ENCODE measurements at regions of chr17 and their contacts with region 1.

Region 1: DNA sequence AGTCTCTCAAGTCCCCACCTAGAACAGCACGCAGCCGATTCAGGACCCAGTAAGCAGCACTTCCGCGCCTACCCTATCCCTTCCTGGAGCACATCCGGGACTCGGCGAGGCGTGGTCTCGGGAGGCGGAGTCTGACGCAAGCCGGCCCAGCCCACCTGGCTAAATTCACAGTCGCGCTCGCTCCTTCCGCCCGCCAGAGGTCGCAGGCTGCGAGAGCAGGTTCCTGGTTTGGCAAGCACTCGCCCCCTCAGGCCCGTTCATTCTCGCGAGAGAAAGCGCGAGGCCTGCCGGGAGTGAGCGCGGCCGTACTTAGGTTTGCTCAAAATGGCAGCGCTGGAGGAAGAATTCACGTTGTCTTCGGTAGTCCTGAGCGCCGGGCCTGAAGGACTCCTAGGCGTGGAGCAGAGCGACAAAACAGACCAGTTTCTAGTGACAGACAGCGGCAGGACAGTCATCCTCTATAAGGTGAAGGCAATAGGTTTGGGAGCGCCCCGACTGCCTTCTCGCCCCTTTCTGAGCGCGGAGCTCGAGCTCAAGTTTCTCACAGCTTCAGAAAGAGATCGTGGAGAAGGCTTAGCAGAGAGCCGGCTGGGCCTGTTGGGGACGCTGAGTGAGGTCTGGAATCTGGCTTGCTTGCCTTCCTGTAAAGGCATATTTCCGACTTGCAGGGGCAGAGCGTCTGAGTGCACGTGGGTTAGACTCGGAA is at the start of gene NOL11:
- DNase-seq: peak; percentile 99 to 100 (median 99)
- ATAC-seq: peak; percentile 91
- H3K4me3 ChIP-seq: peak within 1 kb of the TSS; percentile 81
- H3K4me3 Mint-ChIP-seq: peak within 1 kb of the TSS; percentile 97
- H3K27ac ChIP-seq: peak within 1 kb of the TSS; percentile 91 to 95
- H3K27ac Mint-ChIP-seq: peak within 1 kb of the TSS; percentile 95
- H3K4me1 ChIP-seq: peaks cover 20% of the 10 kb centered on the region
- H3K4me1 Mint-ChIP-seq: peaks cover 30% of the 10 kb centered on the region
- H3K27me3 ChIP-seq: no peaks in the 10 kb centered on the region
- H3K27me3 Mint-ChIP-seq: no peaks in the 10 kb centered on the region
- CTCF ChIP-seq: peak; percentile 83
- total RNA-seq, gene NOL11: 89.1 to 91.2 TPM

Region 2: DNA sequence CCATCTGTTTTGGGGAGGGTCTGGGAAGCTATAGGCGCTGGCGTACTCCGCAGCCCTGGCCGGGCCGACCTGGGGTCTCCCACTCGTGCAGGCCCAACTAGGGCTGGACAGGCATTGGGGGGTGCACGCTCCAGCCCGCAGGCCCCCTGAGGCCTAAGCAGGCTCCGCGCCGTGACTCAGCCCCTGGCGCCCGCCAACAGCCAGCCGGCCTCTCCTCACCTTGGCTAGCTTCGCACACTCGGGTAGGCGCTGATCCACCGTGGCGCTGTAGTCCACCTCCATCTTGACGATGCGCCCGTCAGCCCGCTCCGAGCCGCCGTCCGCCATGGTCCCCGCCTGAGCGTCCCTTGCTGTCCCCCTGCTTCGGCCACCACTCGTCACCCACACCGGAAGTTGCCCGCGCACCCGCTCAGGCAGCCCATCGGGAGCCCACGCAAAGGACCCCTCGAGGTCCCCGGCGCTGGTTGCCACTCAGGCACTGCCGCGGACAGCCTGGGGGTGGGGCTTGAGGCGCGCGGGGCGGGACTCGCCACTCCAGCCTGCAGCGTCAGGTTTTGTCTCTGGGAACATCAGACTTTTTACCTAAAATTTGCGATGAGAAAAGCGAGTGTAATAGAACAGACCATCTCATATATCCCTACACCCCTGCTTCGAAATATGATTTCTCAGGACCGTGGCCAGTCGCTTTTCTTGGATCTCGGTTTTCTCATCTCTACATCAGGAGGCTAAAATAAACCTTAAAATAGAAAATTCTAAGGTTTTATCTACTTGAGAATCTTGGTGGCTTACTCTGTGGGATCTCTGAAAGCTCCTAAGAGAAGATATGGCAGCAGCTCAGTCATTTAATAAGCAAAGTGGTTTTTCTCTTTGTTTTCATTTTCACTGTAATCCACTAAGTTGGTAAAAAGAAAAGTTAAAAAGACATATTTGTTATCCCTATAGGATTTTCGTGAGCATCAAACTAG is 351.3 kb before region 1 on chr17 and contains the start of gene PSMD12:
- CTCF ChIA-PET with region 1: interaction called, 4 read pairs
- POLR2A ChIA-PET with region 1: interaction called, 4 read pairs
- intact Hi-C with region 1: loop called in 1 of 2 experiments (anchors 2 kb)
- DNase-seq: peak; percentile 86 to 96 (median 94)
- ATAC-seq: peak; percentile 93
- H3K4me3 ChIP-seq: peak within 1 kb of the TSS; percentile 87
- H3K4me3 Mint-ChIP-seq: peak within 1 kb of the TSS; percentile 97
- H3K27ac ChIP-seq: peak within 1 kb of the TSS; percentile 91 to 93
- H3K27ac Mint-ChIP-seq: peak within 1 kb of the TSS; percentile 89
- H3K4me1 ChIP-seq: peaks cover 33% of the 10 kb centered on the region
- H3K4me1 Mint-ChIP-seq: peaks cover 39% of the 10 kb centered on the region
- H3K27me3 ChIP-seq: no peaks in the 10 kb centered on the region
- H3K27me3 Mint-ChIP-seq: no peaks in the 10 kb centered on the region
- CTCF ChIP-seq: no peak
- total RNA-seq, gene PSMD12: 49.3 to 52.5 TPM

Region 3: DNA sequence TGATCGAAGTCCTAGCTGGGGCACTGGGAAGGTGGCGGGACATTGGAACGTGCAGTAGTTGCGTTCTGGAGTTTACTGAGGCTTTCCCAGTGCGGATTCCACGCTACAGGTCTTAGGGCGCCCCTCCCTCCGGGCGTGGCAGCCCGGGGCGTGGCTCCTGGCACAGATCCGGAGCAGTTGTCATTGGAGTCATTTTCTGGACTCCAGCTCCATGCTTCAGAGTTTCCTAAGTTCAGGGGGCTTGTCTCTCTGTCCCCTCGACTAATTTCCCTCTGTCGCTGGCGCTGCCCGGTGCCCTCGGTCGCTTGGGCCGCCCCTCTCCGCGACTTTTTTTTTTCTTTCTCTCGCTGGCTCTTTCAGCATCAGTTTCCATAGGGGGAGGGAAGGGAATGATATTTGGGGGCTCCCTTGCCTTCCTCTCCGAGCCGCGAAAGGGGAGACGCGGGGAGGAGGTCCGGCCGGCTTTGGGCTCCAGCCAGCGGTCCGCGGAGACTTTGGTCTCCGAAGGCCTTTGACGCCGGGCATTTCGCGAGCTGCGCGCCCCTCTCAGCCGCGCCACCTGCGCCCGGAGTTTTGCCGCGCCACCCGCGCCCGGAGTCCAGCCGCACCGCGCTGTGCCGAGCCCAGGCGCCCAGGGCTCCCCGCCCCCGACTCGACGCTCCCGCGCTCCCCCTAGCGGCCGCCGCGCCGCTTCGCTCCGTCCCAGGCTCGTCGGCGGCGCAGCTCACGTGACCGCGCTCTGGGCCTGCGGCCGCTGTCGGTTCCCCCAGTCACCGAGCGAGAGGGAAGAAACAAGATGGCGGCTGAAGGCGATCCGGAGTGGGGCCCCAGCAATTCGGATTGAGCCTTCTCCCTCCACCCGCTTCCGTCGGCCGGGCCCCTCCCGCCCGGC is 107.2 kb after region 1 on chr17 and contains the start of gene BPTF:
- CTCF ChIA-PET with region 1: interaction called, 5 read pairs
- POLR2A ChIA-PET with region 1: interaction called, 20 read pairs
- intact Hi-C with region 1: loop called (anchors 1 to 2 kb)
- DNase-seq: peak; percentile 83 to 98 (median 90)
- ATAC-seq: peak; percentile 75
- H3K4me3 ChIP-seq: peak within 1 kb of the TSS; percentile 92
- H3K4me3 Mint-ChIP-seq: peak within 1 kb of the TSS; percentile 100
- H3K27ac ChIP-seq: peak within 1 kb of the TSS; percentile 48 to 74
- H3K27ac Mint-ChIP-seq: peak within 1 kb of the TSS; percentile 100
- H3K4me1 ChIP-seq: peaks cover 27% of the 10 kb centered on the region
- H3K4me1 Mint-ChIP-seq: peaks cover 42% of the 10 kb centered on the region
- H3K27me3 ChIP-seq: no peaks in the 10 kb centered on the region
- H3K27me3 Mint-ChIP-seq: peaks cover under 1% of the 10 kb centered on the region
- CTCF ChIP-seq: peak; percentile 88
- total RNA-seq, gene BPTF: 117 to 125 TPM

Region 4: DNA sequence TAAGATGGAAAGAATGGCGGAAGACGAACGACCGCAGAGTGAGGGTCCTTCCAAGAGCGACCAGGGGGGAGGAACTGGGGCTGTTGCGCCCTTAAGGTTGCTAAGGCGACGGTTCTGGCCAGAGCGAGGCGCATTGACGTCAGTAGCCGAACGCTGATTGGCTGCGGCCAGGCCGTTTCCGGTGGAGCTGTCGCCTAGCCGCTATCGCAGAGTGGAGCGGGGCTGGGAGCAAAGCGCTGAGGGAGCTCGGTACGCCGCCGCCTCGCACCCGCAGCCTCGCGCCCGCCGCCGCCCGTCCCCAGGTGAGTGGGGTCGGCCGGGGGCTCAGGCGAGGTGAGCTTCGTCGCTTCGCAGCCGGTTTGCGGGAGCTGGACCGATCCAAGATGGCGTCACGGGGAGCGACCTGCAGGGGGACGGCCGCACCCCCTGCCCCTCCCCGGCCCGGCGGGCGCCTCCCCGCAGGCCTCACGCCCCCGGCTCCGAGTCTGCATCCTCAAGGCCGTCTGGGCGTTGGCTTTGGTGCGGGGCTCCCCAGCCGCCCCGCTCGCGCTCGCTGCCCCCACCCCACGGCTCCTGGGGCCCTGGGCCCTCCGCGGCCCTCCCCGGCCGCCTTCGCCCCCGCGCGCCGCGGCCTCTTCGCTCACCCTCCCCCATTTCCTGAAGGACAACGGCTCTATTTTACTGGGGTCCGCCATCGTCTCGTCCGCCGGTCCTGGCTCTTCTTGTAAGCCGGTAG is 794.6 kb after region 1 on chr17 and contains the start of gene PRKAR1A:
- CTCF ChIA-PET with region 1: no interaction called
- POLR2A ChIA-PET with region 1: no interaction called
- intact Hi-C with region 1: loop called in 1 of 2 experiments (anchors 5 kb)
- DNase-seq: peak; percentile 83 to 97 (median 90)
- ATAC-seq: peak; percentile 82
- H3K4me3 ChIP-seq: peak within 1 kb of the TSS; percentile 80
- H3K4me3 Mint-ChIP-seq: peak within 1 kb of the TSS; percentile 100
- H3K27ac ChIP-seq: peak within 1 kb of the TSS; percentile 98
- H3K27ac Mint-ChIP-seq: peak within 1 kb of the TSS; percentile 99
- H3K4me1 ChIP-seq: peaks cover 17% of the 10 kb centered on the region
- H3K4me1 Mint-ChIP-seq: peaks cover 50% of the 10 kb centered on the region
- H3K27me3 ChIP-seq: no peaks in the 10 kb centered on the region
- H3K27me3 Mint-ChIP-seq: no peaks in the 10 kb centered on the region
- CTCF ChIP-seq: no peak
- total RNA-seq, gene PRKAR1A: 88.8 to 89.1 TPM

Region 5: GRCh38 chr17:68591583-68591982 is 873.8 kb after region 1 on chr17:
- CTCF ChIA-PET with region 1: no interaction called
- POLR2A ChIA-PET with region 1: no interaction called
- intact Hi-C with region 1: no loop called
- DNase-seq: peak in 2 of 14 experiments; percentile 4 to 9
- ATAC-seq: no peak
- H3K4me3 ChIP-seq: no peak overlapping the region
- H3K4me3 Mint-ChIP-seq: no peak overlapping the region
- H3K27ac ChIP-seq: no peak overlapping the region
- H3K27ac Mint-ChIP-seq: no peak overlapping the region
- H3K4me1 ChIP-seq: peaks cover 10% of the 10 kb centered on the region
- H3K4me1 Mint-ChIP-seq: peaks cover 14% of the 10 kb centered on the region
- H3K27me3 ChIP-seq: peaks cover 5 to 33% of the 10 kb centered on the region in 2 experiments
- H3K27me3 Mint-ChIP-seq: peaks cover 59% of the 10 kb centered on the region
- CTCF ChIP-seq: no peak

Measured in CD4-positive, alpha-beta T cell (primary cell).